GM23248 (cell line): ENCODE measurements at regions of chr2 and their contacts with region 1.

Region 1: GRCh38 chr2:157327621-157328500 is 2.2 kb upstream of the ERMN start:
- DNase-seq: peak; percentile 79
- H3K4me3 ChIP-seq: no peak overlapping the region
- H3K27ac ChIP-seq: no peak overlapping the region
- H3K4me1 ChIP-seq: 0 out of 2 replicates have a peak, but pooled peaks cover 5% of the 10 kb centered on the region
- H3K27me3 ChIP-seq: no peaks in the 10 kb centered on the region

Region 2: GRCh38 chr2:157061799-157062198 is 266.1 kb before region 1 on chr2:
- in situ Hi-C with region 1: no loop called
- DNase-seq: no peak
- H3K4me3 ChIP-seq: no peak overlapping the region
- H3K27ac ChIP-seq: no peak overlapping the region
- H3K4me1 ChIP-seq: peaks cover 1% of the 10 kb centered on the region
- H3K27me3 ChIP-seq: no peaks in the 10 kb centered on the region

Region 3: GRCh38 chr2:157438863-157439823 is 111.3 kb after region 1 on chr2:
- in situ Hi-C with region 1: no loop called
- DNase-seq: peak; percentile 59
- H3K4me3 ChIP-seq: no peak overlapping the region
- H3K27ac ChIP-seq: no peak overlapping the region
- H3K4me1 ChIP-seq: no peaks in the 10 kb centered on the region
- H3K27me3 ChIP-seq: peaks cover 17% of the 10 kb centered on the region

Region 4: DNA sequence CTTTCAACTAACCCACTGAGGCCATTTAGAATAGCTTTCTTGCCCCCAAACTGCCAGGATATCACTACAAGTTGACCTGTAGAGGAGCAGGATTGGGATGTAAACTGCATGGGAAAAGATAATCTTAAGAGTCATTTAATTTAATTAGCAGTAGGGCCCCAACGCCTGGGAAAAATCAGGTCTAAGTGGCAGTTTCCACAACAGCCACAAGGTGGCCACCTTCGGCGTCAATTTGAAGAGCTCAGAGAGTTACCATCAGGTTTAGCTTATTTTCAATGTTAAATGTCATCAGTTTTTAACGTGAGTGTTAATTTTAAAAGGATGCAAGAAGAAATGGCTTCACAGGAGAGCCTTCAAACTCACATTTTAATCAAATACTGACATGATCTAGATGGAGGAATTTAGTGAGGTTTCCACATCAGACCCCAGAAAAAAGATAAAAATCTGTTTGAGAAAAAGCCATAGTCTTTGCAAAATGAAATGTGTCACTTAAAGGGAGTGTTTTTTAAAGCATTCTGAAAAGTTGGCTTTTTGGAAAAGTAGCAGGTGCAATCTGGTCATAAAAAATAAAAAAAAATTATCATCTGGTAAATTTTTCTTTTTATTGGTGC is 696.5 kb after region 1 on chr2:
- in situ Hi-C with region 1: loop called (anchors 25 kb)
- DNase-seq: peak; percentile 67
- H3K4me3 ChIP-seq: no peak overlapping the region
- H3K27ac ChIP-seq: no peak overlapping the region
- H3K4me1 ChIP-seq: no peaks in the 10 kb centered on the region
- H3K27me3 ChIP-seq: no peaks in the 10 kb centered on the region